H1 (cell line): ENCODE measurements at regions of chr14 and their contacts with region 1.

Region 1: DNA sequence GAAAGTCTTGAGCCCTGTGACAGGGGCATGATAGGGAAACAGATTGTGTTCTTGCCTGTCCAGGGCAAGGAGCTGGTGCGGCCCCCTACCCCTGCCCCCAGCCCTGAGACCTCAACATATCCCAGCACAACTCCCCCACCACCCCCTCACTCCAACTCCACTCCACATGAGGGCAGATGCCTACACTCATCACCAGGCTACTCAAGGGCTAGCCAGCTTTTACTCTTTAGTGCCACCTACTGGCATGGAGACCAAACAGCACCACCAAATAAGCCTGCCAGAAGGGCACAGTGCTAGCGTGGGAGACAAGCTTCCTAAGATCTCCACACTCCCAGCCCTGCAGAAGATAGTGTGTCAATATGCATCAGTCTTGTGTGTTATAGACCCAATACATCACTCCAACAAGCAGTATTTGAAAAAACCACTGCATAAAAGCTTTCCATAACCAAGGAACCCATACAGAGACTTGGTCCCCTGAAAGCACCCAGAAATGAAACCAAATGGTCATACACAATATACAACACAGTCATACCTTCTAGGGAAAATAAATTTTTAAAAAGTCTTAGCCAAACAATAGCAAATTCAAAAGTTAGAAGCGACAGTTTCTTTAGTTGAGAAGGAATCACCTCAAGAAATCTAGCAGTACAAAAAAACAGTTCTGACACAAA is 154.4 kb downstream of the KCNK10 start:
- DNase-seq: peak in 1 of 2 experiments; percentile 73
- H3K4me3 ChIP-seq: no peak overlapping the region
- H3K27ac ChIP-seq: no peak overlapping the region
- H3K4me1 ChIP-seq: no peaks in the 10 kb centered on the region
- H3K27me3 ChIP-seq: no peaks in the 10 kb centered on the region
- CTCF ChIP-seq: peak; percentile 76 to 94 (median 93)
- EP300 ChIP-seq: no peak
- POLR2A ChIP-seq: no peak
- RAD21 ChIP-seq: peak; percentile 81 to 89

Region 2: GRCh38 chr14:87944987-87945604 is 223.5 kb before region 1 on chr14:
- CTCF ChIA-PET with region 1: interaction called, 18 read pairs
- POLR2A ChIA-PET with region 1: no interaction called
- DNase-seq: no peak
- H3K4me3 ChIP-seq: no peak overlapping the region
- H3K27ac ChIP-seq: no peak overlapping the region
- H3K4me1 ChIP-seq: no peaks in the 10 kb centered on the region
- H3K27me3 ChIP-seq: no peaks in the 10 kb centered on the region
- CTCF ChIP-seq: peak in 2 of 3 experiments; percentile 37 to 47; a peak in 2 of 4 replicates
- EP300 ChIP-seq: no peak
- POLR2A ChIP-seq: no peak
- RAD21 ChIP-seq: peak; percentile 57 to 67

Region 3: GRCh38 chr14:88013750-88014349 is 154.8 kb before region 1 on chr14:
- CTCF ChIA-PET with region 1: interaction called, 79 read pairs
- POLR2A ChIA-PET with region 1: no interaction called
- DNase-seq: peak in 1 of 2 experiments; percentile 69
- H3K4me3 ChIP-seq: no peak overlapping the region
- H3K27ac ChIP-seq: no peak overlapping the region
- H3K4me1 ChIP-seq: peaks cover 0 to 3% (median 0%) of the 10 kb centered on the region in 4 experiments; a peak in 1 of 7 replicates
- H3K27me3 ChIP-seq: no peaks in the 10 kb centered on the region
- CTCF ChIP-seq: peak; percentile 59 to 87 (median 85)
- EP300 ChIP-seq: no peak
- POLR2A ChIP-seq: no peak
- RAD21 ChIP-seq: peak; percentile 93 to 94

Region 4: DNA sequence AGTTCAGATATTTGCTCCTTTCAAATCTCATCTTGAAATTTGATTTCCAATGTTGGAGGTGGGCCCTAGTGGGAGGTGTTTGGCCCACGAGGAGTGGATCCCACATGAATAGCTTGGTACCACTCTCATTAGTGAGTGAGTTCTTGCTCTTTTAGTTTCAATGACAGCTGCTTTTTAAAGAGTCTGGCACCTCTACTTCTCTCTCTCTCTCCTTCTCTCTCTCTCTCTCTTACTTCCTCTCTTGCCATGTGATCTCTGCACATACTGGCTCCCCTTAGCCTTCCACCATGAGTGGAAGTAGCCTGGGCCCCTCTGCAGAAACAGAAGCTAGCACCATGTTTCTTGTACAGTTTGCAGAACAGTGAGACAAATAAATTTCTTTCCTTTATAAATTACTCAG is 138.6 kb before region 1 on chr14:
- CTCF ChIA-PET with region 1: interaction called, 10 read pairs
- POLR2A ChIA-PET with region 1: no interaction called
- DNase-seq: no peak
- H3K4me3 ChIP-seq: no peak overlapping the region
- H3K27ac ChIP-seq: no peak overlapping the region
- H3K4me1 ChIP-seq: no peaks in the 10 kb centered on the region
- H3K27me3 ChIP-seq: no peaks in the 10 kb centered on the region
- CTCF ChIP-seq: no peak
- EP300 ChIP-seq: no peak
- POLR2A ChIP-seq: no peak
- RAD21 ChIP-seq: no peak

Region 5: DNA sequence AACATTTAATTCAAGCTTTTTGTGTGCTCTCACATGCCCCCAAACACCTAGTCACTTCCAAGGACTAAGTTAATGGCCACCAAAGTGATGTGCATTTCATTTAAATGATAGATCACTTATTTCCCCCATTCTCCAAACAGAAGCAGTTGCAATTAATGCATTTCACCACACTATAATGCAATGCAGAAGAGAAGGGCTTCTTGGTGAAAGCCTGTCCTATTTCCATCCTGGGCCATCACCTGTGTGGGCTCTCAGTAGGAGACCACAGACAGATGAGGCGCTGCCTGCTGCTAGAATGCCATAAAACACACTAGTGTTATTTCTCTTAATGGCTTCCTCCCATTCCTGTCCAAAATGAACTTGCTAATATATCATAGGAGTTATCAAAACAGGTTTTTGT is 12.5 kb before region 1 on chr14:
- CTCF ChIA-PET with region 1: interaction called, 17 read pairs
- POLR2A ChIA-PET with region 1: no interaction called
- DNase-seq: no peak
- H3K4me3 ChIP-seq: no peak overlapping the region
- H3K27ac ChIP-seq: no peak overlapping the region
- H3K4me1 ChIP-seq: no peaks in the 10 kb centered on the region
- H3K27me3 ChIP-seq: no peaks in the 10 kb centered on the region; a peak in 1 of 7 replicates
- CTCF ChIP-seq: no peak
- EP300 ChIP-seq: no peak
- POLR2A ChIP-seq: no peak
- RAD21 ChIP-seq: no peak

Region 6: DNA sequence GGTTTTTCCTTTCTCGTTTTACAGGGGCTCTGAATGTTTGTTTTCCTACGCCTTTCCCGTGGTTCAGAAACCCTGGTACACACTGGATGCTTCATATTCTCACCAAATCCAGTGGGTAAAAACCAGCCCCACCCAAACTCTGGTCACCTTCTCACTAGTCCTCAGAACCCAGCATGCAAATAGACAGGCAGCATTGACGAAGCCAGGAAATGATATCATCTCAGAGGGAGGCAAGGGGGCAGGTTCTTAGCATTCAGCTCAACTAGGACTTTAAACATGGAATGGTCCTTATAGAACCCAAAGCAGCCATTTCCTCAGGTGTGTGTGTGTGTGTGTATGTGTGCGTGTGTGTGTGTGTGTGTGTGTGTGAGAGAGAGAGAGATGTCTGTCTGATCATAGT is 12.4 kb after region 1 on chr14:
- CTCF ChIA-PET with region 1: interaction called, 45 read pairs
- POLR2A ChIA-PET with region 1: no interaction called
- DNase-seq: peak in 1 of 2 experiments; percentile 19
- H3K4me3 ChIP-seq: no peak overlapping the region
- H3K27ac ChIP-seq: no peak overlapping the region
- H3K4me1 ChIP-seq: no peaks in the 10 kb centered on the region
- H3K27me3 ChIP-seq: peaks cover 0 to 1% (median 0%) of the 10 kb centered on the region in 4 experiments; a peak in 1 of 7 replicates
- CTCF ChIP-seq: no peak
- EP300 ChIP-seq: no peak
- POLR2A ChIP-seq: no peak
- RAD21 ChIP-seq: no peak